ENCODE measurements at regions of chr13 and their contacts with region 1.

Region 1: GRCh38 chr13:28657784-28658538 is 969 bp upstream of the POMP start:
- DNase-seq: no peak
- H3K4me3 ChIP-seq: peak overlapping the region; percentile 93 to 99 (median 95)
- H3K27ac ChIP-seq: no peak overlapping the region; the same call in 1 of the 2 replicates
- H3K4me1 ChIP-seq: peaks cover 3 to 12% (median 8%) of the 10 kb centered on the region in 4 experiments; a peak in 6 of 7 replicates
- H3K27me3 ChIP-seq: no peaks in the 10 kb centered on the region
- CTCF ChIP-seq: no peak
- EP300 ChIP-seq: no peak
- POLR2A ChIP-seq: no peak
- RAD21 ChIP-seq: no peak

Region 2: GRCh38 chr13:28671126-28671792 is 13.3 kb after region 1 on chr13:
- CTCF ChIA-PET with region 1: interaction called, 11 read pairs
- POLR2A ChIA-PET with region 1: interaction called, 8 read pairs
- DNase-seq: no peak
- H3K4me3 ChIP-seq: no peak overlapping the region
- H3K27ac ChIP-seq: no peak overlapping the region
- H3K4me1 ChIP-seq: no peaks in the 10 kb centered on the region
- H3K27me3 ChIP-seq: no peaks in the 10 kb centered on the region
- CTCF ChIP-seq: no peak
- EP300 ChIP-seq: no peak
- POLR2A ChIP-seq: no peak
- RAD21 ChIP-seq: no peak